CD4-positive, alpha-beta memory T cell (primary cell): ENCODE measurements at regions of chr11 and their contacts with region 1.

Region 1: GRCh38 chr11:96279018-96279895 is 63.7 kb downstream of the MAML2 start:
- DNase-seq: no peak
- H3K4me3 ChIP-seq: no peak overlapping the region
- H3K4me3 Mint-ChIP-seq: peak overlapping the region in 3 of 8 donors; percentile 17 to 29 (median 23)
- H3K27ac ChIP-seq: no peak overlapping the region
- H3K27ac Mint-ChIP-seq: peak overlapping the region; percentile 4 to 71 (median 41)
- H3K4me1 ChIP-seq: peaks cover 57% of the 10 kb centered on the region
- H3K4me1 Mint-ChIP-seq: peaks cover 38 to 65% (median 57%) of the 10 kb centered on the region in 4 donors
- H3K27me3 ChIP-seq: no peaks in the 10 kb centered on the region
- H3K27me3 Mint-ChIP-seq: no peaks in the 10 kb centered on the region

Region 2: GRCh38 chr11:96267496-96268032 is 11.7 kb before region 1 on chr11:
- CTCF ChIA-PET with region 1: interaction called, 7 read pairs
- POLR2A ChIA-PET with region 1: interaction called, 13 read pairs
- intact Hi-C with region 1: no loop called
- DNase-seq: peak; percentile 35 to 71 (median 46)
- H3K4me3 ChIP-seq: peak overlapping the region; percentile 14 to 28
- H3K4me3 Mint-ChIP-seq: peak overlapping the region; percentile 70 to 90 (median 82)
- H3K27ac ChIP-seq: peak overlapping the region; percentile 68
- H3K27ac Mint-ChIP-seq: peak overlapping the region; percentile 88 to 96 (median 93)
- H3K4me1 ChIP-seq: peaks cover 57% of the 10 kb centered on the region
- H3K4me1 Mint-ChIP-seq: peaks cover 61 to 92% (median 77%) of the 10 kb centered on the region in 4 donors
- H3K27me3 ChIP-seq: no peaks in the 10 kb centered on the region
- H3K27me3 Mint-ChIP-seq: no peaks in the 10 kb centered on the region

Region 3: DNA sequence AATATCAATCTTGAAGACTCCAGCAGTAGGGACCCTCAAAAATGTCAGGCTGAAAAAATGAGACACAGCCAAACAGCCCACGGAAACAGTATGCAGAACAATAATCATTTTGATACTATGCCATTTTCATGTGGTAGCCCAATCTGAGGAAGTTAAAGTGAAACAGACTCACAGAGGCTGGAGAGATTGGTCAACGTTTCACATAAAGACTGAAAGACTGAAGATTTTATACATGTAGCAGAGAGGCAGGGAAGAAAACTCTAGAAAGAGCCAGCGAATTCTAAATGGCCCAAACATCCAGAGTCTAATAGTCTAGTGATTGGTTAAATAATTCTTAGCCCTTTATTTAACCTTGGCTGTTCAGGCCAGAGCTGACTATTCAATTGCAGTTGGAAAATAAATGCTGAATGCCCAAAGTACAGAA is 14.4 kb after region 1 on chr11:
- CTCF ChIA-PET with region 1: no interaction called
- POLR2A ChIA-PET with region 1: interaction called, 5 read pairs
- intact Hi-C with region 1: loop called (anchors 2 kb)
- DNase-seq: no peak
- H3K4me3 ChIP-seq: no peak overlapping the region
- H3K4me3 Mint-ChIP-seq: peak overlapping the region in 7 of 8 donors; percentile 43 to 89 (median 56)
- H3K27ac ChIP-seq: no peak overlapping the region
- H3K27ac Mint-ChIP-seq: peak overlapping the region in 6 of 7 donors; percentile 1 to 80 (median 52)
- H3K4me1 ChIP-seq: peaks cover 50% of the 10 kb centered on the region
- H3K4me1 Mint-ChIP-seq: peaks cover 52 to 76% (median 61%) of the 10 kb centered on the region in 4 donors
- H3K27me3 ChIP-seq: no peaks in the 10 kb centered on the region
- H3K27me3 Mint-ChIP-seq: no peaks in the 10 kb centered on the region

Region 4: GRCh38 chr11:96893988-96894387 is 614.7 kb after region 1 on chr11:
- CTCF ChIA-PET with region 1: no interaction called
- POLR2A ChIA-PET with region 1: no interaction called
- intact Hi-C with region 1: no loop called
- DNase-seq: no peak
- H3K4me3 ChIP-seq: no peak overlapping the region
- H3K4me3 Mint-ChIP-seq: no peak overlapping the region
- H3K27ac ChIP-seq: no peak overlapping the region
- H3K27ac Mint-ChIP-seq: no peak overlapping the region
- H3K4me1 ChIP-seq: no peaks in the 10 kb centered on the region
- H3K4me1 Mint-ChIP-seq: no peaks in the 10 kb centered on the region
- H3K27me3 ChIP-seq: no peaks in the 10 kb centered on the region
- H3K27me3 Mint-ChIP-seq: no peaks in the 10 kb centered on the region